ENCODE measurements at regions of chr12 and their contacts with region 1.

Region 1: GRCh38 chr12:69639400-69640016 is 28.8 kb upstream of the LRRC10 start:
- DNase-seq: peak; percentile 15 to 71 (median 53)
- ATAC-seq: peak; percentile 73
- H3K4me3 ChIP-seq: no peak overlapping the region
- H3K4me3 Mint-ChIP-seq: no peak overlapping the region
- H3K27ac ChIP-seq: no peak overlapping the region
- H3K27ac Mint-ChIP-seq: no peak overlapping the region
- H3K4me1 ChIP-seq: no peaks in the 10 kb centered on the region
- H3K4me1 Mint-ChIP-seq: no peaks in the 10 kb centered on the region
- H3K27me3 ChIP-seq: no peaks in the 10 kb centered on the region
- H3K27me3 Mint-ChIP-seq: no peaks in the 10 kb centered on the region
- CTCF ChIP-seq: peak; percentile 81

Region 2: DNA sequence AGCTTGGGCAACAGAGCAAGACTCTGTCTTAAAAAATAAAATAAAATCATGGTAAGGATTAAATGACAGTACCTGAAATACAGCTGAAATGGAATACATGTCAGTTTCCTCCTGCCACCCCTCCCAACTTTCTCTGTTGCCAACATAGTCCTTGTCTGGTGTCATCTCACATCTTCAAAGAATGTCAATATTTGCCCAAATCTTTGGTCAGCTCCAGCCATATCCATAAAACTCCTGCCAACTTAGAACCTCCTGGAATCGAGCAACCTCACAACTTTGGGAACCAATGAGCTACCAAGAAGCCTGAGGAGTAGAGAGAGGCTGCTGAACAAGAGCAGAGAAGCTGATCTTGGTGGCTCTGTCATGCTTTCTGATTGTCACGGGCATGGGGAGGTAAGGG is 18.0 kb before region 1 on chr12:
- CTCF ChIA-PET with region 1: interaction called, 12 read pairs
- POLR2A ChIA-PET with region 1: no interaction called
- intact Hi-C with region 1: no loop called
- DNase-seq: no peak
- ATAC-seq: no peak
- H3K4me3 ChIP-seq: no peak overlapping the region
- H3K4me3 Mint-ChIP-seq: no peak overlapping the region
- H3K27ac ChIP-seq: no peak overlapping the region
- H3K27ac Mint-ChIP-seq: no peak overlapping the region
- H3K4me1 ChIP-seq: no peaks in the 10 kb centered on the region
- H3K4me1 Mint-ChIP-seq: no peaks in the 10 kb centered on the region
- H3K27me3 ChIP-seq: no peaks in the 10 kb centered on the region
- H3K27me3 Mint-ChIP-seq: peaks cover 6% of the 10 kb centered on the region
- CTCF ChIP-seq: no peak

Region 3: GRCh38 chr12:69653703-69654102 is 14.2 kb after region 1 on chr12:
- CTCF ChIA-PET with region 1: interaction called, 10 read pairs
- POLR2A ChIA-PET with region 1: interaction called, 3 read pairs
- intact Hi-C with region 1: no loop called
- DNase-seq: no peak
- ATAC-seq: no peak
- H3K4me3 ChIP-seq: no peak overlapping the region
- H3K4me3 Mint-ChIP-seq: no peak overlapping the region
- H3K27ac ChIP-seq: no peak overlapping the region
- H3K27ac Mint-ChIP-seq: no peak overlapping the region
- H3K4me1 ChIP-seq: no peaks in the 10 kb centered on the region
- H3K4me1 Mint-ChIP-seq: no peaks in the 10 kb centered on the region
- H3K27me3 ChIP-seq: no peaks in the 10 kb centered on the region
- H3K27me3 Mint-ChIP-seq: peaks cover 13% of the 10 kb centered on the region
- CTCF ChIP-seq: no peak